PC-3 (cell line): ENCODE measurements at regions of chr18 and their contacts with region 1.

Region 1: GRCh38 chr18:50194631-50195532 is at the start of gene MYO5B:
- DNase-seq: peak; percentile 69
- ATAC-seq: peak; percentile 72
- H3K4me3 ChIP-seq: peak within 1 kb of the TSS; percentile 71
- H3K27ac ChIP-seq: 0 out of 2 replicates have a peak within 1 kb of the TSS, but pooled peaks have one; percentile 13
- H3K4me1 ChIP-seq: peaks cover 13% of the 10 kb centered on the region; the same call in 1 of the 2 replicates
- H3K27me3 ChIP-seq: no peaks in the 10 kb centered on the region
- CTCF ChIP-seq: no peak; the same call in 1 of the 2 replicates
- total RNA-seq, gene MYO5B: 10.4 and 10.7 TPM in 2 replicates

Region 2: GRCh38 chr18:50099725-50100407 is 95.0 kb before region 1 on chr18:
- CTCF ChIA-PET with region 1: no interaction called
- POLR2A ChIA-PET with region 1: interaction called, 6 read pairs
- intact Hi-C with region 1: loop called (anchors 5 kb)
- DNase-seq: peak; percentile 71
- ATAC-seq: peak; percentile 58
- H3K4me3 ChIP-seq: no peak overlapping the region
- H3K27ac ChIP-seq: peak overlapping the region; percentile 92
- H3K4me1 ChIP-seq: peaks cover 42% of the 10 kb centered on the region
- H3K27me3 ChIP-seq: no peaks in the 10 kb centered on the region
- CTCF ChIP-seq: no peak

Region 3: DNA sequence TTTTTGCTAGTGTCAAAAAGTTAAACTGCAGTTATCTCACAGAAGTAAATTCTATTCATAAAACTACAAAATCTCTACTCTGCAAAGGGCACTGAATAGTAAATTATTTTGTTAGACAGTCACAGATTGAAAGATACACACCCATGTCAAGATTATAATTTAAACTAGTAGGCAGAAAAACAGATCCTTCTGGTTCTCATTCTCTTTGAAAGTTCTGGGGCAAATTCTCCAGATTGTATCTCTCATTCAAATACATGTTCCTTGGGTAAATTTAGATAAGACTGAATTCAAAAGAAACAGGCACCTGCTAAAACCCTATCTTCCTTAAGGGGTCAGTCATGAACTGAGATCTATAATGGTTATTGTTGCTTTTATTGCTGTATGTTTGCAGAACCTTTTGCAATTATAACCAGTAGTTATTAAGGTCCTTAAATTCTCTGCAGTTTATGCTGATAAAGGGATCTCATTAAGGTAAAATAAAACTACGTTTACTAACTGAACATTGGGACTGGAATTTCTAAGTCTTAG is 83.6 kb before region 1 on chr18:
- CTCF ChIA-PET with region 1: no interaction called
- POLR2A ChIA-PET with region 1: no interaction called
- intact Hi-C with region 1: loop called (anchors 1 kb)
- DNase-seq: peak; percentile 11
- ATAC-seq: no peak
- H3K4me3 ChIP-seq: no peak overlapping the region
- H3K27ac ChIP-seq: no peak overlapping the region
- H3K4me1 ChIP-seq: no peaks in the 10 kb centered on the region
- H3K27me3 ChIP-seq: no peaks in the 10 kb centered on the region
- CTCF ChIP-seq: no peak; the same call in 1 of the 2 replicates

Region 4: GRCh38 chr18:50307738-50308470 is 113.0 kb after region 1 on chr18:
- CTCF ChIA-PET with region 1: no interaction called
- POLR2A ChIA-PET with region 1: no interaction called
- intact Hi-C with region 1: no loop called
- DNase-seq: peak; percentile 53
- ATAC-seq: peak; percentile 90
- H3K4me3 ChIP-seq: peak overlapping the region; percentile 63
- H3K27ac ChIP-seq: no peak overlapping the region
- H3K4me1 ChIP-seq: no peaks in the 10 kb centered on the region
- H3K27me3 ChIP-seq: no peaks in the 10 kb centered on the region
- CTCF ChIP-seq: no peak